Calu3 (cell line): ENCODE measurements at regions of chr16 and their contacts with region 1.

Region 1: GRCh38 chr16:23435500-23435899 is 17.5 kb downstream of the COG7 start:
- DNase-seq: peak; percentile 79
- H3K4me3 Mint-ChIP-seq: no peak overlapping the region
- H3K27ac Mint-ChIP-seq: no peak overlapping the region
- H3K4me1 Mint-ChIP-seq: no peaks in the 10 kb centered on the region
- H3K27me3 Mint-ChIP-seq: no peaks in the 10 kb centered on the region
- CTCF ChIP-seq: peak; percentile 89

Region 2: GRCh38 chr16:22898874-22899348 is 536.6 kb before region 1 on chr16:
- CTCF ChIA-PET with region 1: no interaction called
- intact Hi-C with region 1: loop called (anchors 5 kb)
- DNase-seq: peak; percentile 86
- H3K4me3 Mint-ChIP-seq: no peak overlapping the region
- H3K27ac Mint-ChIP-seq: no peak overlapping the region
- H3K4me1 Mint-ChIP-seq: no peaks in the 10 kb centered on the region
- H3K27me3 Mint-ChIP-seq: peaks cover 17% of the 10 kb centered on the region
- CTCF ChIP-seq: peak; percentile 88

Region 3: GRCh38 chr16:23088018-23088417 is 347.5 kb before region 1 on chr16:
- CTCF ChIA-PET with region 1: no interaction called
- intact Hi-C with region 1: loop called (anchors 5 kb)
- DNase-seq: no peak
- H3K4me3 Mint-ChIP-seq: no peak overlapping the region
- H3K27ac Mint-ChIP-seq: no peak overlapping the region
- H3K4me1 Mint-ChIP-seq: no peaks in the 10 kb centered on the region
- H3K27me3 Mint-ChIP-seq: no peaks in the 10 kb centered on the region
- CTCF ChIP-seq: no peak

Region 4: GRCh38 chr16:23182460-23183309 is 252.8 kb before region 1 on chr16 and contains the start of gene SCNN1G:
- CTCF ChIA-PET with region 1: interaction called, 54 read pairs
- intact Hi-C with region 1: loop called (anchors 1 kb)
- DNase-seq: peak; percentile 99
- H3K4me3 Mint-ChIP-seq: peak within 1 kb of the TSS; percentile 41
- H3K27ac Mint-ChIP-seq: no peak within 1 kb of the TSS
- H3K4me1 Mint-ChIP-seq: peaks cover 10% of the 10 kb centered on the region
- H3K27me3 Mint-ChIP-seq: peaks cover 86% of the 10 kb centered on the region
- CTCF ChIP-seq: peak; percentile 98
- total RNA-seq, gene SCNN1G: not detected in 2 replicates

Region 5: DNA sequence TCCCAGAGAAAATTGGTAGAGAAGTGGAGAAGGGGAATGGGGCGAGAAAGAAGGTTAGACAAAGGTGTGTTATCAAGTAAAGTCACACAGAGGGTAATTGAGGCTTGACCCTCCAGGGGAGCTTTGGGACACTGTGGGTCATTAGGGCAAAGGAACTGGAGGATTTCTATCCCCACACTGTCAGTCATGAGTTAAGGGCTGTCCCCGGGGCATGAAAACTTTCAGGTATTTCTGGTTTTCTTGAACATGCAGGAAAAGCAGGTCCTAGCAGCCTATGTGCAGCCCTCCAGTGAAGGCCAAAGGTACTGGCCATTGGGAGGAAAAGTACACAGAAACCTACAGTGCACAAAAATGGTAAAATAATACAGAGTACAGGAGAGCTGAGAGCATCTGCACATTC is 177.9 kb before region 1 on chr16:
- CTCF ChIA-PET with region 1: no interaction called
- intact Hi-C with region 1: loop called (anchors 5 kb)
- DNase-seq: peak; percentile 48
- H3K4me3 Mint-ChIP-seq: no peak overlapping the region
- H3K27ac Mint-ChIP-seq: no peak overlapping the region
- H3K4me1 Mint-ChIP-seq: peaks cover 19% of the 10 kb centered on the region
- H3K27me3 Mint-ChIP-seq: peaks cover 34% of the 10 kb centered on the region
- CTCF ChIP-seq: no peak

Region 6: GRCh38 chr16:23302045-23302956 is 133.2 kb before region 1 on chr16 and contains the start of gene SCNN1B:
- CTCF ChIA-PET with region 1: no interaction called
- intact Hi-C with region 1: loop called (anchors 10 kb)
- DNase-seq: peak; percentile 21
- H3K4me3 Mint-ChIP-seq: peak within 1 kb of the TSS; percentile 45
- H3K27ac Mint-ChIP-seq: no peak within 1 kb of the TSS
- H3K4me1 Mint-ChIP-seq: peaks cover 11% of the 10 kb centered on the region
- H3K27me3 Mint-ChIP-seq: peaks cover 75% of the 10 kb centered on the region
- CTCF ChIP-seq: no peak
- total RNA-seq, gene SCNN1B: not detected in 2 replicates